Heart right ventricle (tissue), 16 donors: ENCODE measurements at regions of chr1 and their contacts with region 1.

Region 1: DNA sequence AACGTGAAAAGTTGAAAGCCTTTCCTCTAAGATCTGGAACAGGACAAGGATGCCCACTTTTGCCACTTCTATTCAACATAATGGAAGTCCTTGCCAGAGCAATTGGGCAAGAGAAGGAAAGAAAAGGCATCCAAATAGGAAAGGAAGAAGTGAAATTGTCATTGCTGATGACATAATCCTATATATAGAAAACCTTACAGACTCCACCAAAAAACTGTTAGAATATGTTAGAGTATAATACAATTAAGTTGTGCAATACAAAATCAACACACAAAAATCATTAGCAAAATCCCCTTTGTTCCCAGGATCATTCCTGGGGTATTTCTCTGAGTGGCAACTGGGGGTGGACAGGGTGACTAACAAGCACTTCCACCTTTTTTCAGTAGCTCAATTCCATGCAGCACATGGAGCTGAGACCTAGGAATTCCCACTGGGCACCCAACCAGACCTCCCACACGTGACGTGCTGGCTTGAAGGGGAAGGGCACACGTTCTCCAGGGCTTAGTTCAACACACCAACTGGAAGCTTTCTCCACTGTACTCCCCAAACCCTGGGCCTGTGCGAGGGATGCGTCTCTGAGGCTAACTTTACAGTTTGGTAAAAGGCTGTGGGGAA is 9.6 kb downstream of the STUM start:
- DNase-seq: no peak
- ATAC-seq: peak in 1 of 8 donors; percentile 42
- H3K4me3 ChIP-seq: no peak overlapping the region
- H3K27ac ChIP-seq: no peak overlapping the region
- H3K4me1 ChIP-seq: peaks cover 0 to 5% (median 0%) of the 10 kb centered on the region in 9 donors
- H3K27me3 ChIP-seq: peaks cover 0 to 5% (median 0%) of the 10 kb centered on the region in 7 donors
- CTCF ChIP-seq: no peak

Region 2: GRCh38 chr1:226510453-226510852 is 47.7 kb before region 1 on chr1:
- intact Hi-C with region 1: loop called in 1 of 10 experiments (anchors 2 kb)
- DNase-seq: no peak
- ATAC-seq: peak in 1 of 8 donors; percentile 48
- H3K4me3 ChIP-seq: no peak overlapping the region
- H3K27ac ChIP-seq: no peak overlapping the region
- H3K4me1 ChIP-seq: no peaks in the 10 kb centered on the region
- H3K27me3 ChIP-seq: peaks cover 0 to 27% (median 13%) of the 10 kb centered on the region in 7 donors
- CTCF ChIP-seq: no peak

Region 3: DNA sequence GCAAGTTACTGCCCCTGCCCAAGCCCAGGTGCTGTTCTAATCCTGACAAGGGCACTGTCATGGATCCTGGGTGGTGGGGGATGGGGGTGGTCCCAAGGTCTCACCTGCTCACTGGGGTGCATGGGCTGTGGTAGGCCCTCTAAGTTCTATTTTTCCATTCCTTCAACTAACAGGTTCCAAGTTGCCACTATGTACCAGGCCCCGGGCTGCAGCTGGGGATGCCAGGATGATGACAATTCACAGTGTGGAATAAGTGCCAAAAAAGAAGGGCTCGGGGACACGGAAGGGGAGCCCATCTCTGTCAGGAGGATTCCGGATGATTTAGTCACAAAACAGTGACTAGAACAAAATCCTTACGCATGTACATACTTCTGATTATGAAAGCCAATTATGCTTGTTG is 66.4 kb after region 1 on chr1:
- intact Hi-C with region 1: no loop called
- DNase-seq: no peak
- ATAC-seq: no peak
- H3K4me3 ChIP-seq: no peak overlapping the region
- H3K27ac ChIP-seq: no peak overlapping the region
- H3K4me1 ChIP-seq: peaks cover 0 to 10% (median 0%) of the 10 kb centered on the region in 9 donors
- H3K27me3 ChIP-seq: no peaks in the 10 kb centered on the region
- CTCF ChIP-seq: no peak

Region 4: GRCh38 chr1:226708342-226708780 is 150.2 kb after region 1 on chr1:
- intact Hi-C with region 1: no loop called
- DNase-seq: no peak
- ATAC-seq: peak in 2 of 8 donors; percentile 0 to 27
- H3K4me3 ChIP-seq: no peak overlapping the region
- H3K27ac ChIP-seq: peak overlapping the region in 8 of 10 donors; percentile 15 to 78 (median 51)
- H3K4me1 ChIP-seq: peaks cover 10 to 95% (median 71%) of the 10 kb centered on the region in 9 donors
- H3K27me3 ChIP-seq: no peaks in the 10 kb centered on the region
- CTCF ChIP-seq: no peak